Body of pancreas (tissue), 4 donors: ENCODE measurements at regions of chr1 and their contacts with region 1.

Region 1: GRCh38 chr1:14835725-14836124 is 237.2 kb downstream of the KAZN start:
- DNase-seq: no peak
- ATAC-seq: no peak
- H3K4me3 ChIP-seq: no peak overlapping the region
- H3K27ac ChIP-seq: no peak overlapping the region
- H3K4me1 ChIP-seq: no peaks in the 10 kb centered on the region
- H3K27me3 ChIP-seq: no peaks in the 10 kb centered on the region
- CTCF ChIP-seq: no peak
- POLR2A ChIP-seq: no peak

Region 2: GRCh38 chr1:14894811-14895560 is 59.3 kb after region 1 on chr1:
- intact Hi-C with region 1: no loop called
- DNase-seq: peak; percentile 38 to 70 (median 52)
- ATAC-seq: peak; percentile 74
- H3K4me3 ChIP-seq: no peak overlapping the region
- H3K27ac ChIP-seq: peak overlapping the region in 3 of 4 donors; percentile 20 to 62 (median 58)
- H3K4me1 ChIP-seq: peaks cover 34% of the 10 kb centered on the region
- H3K27me3 ChIP-seq: no peaks in the 10 kb centered on the region
- CTCF ChIP-seq: no peak
- POLR2A ChIP-seq: no peak

Region 3: GRCh38 chr1:15028102-15028501 is 192.4 kb after region 1 on chr1:
- intact Hi-C with region 1: loop called (anchors 10 kb)
- DNase-seq: peak in 3 of 4 donors; percentile 15 to 26 (median 18)
- ATAC-seq: no peak
- H3K4me3 ChIP-seq: no peak overlapping the region
- H3K27ac ChIP-seq: no peak overlapping the region
- H3K4me1 ChIP-seq: no peaks in the 10 kb centered on the region
- H3K27me3 ChIP-seq: no peaks in the 10 kb centered on the region
- CTCF ChIP-seq: no peak
- POLR2A ChIP-seq: no peak

Region 4: GRCh38 chr1:15106608-15107007 is 270.9 kb after region 1 on chr1:
- intact Hi-C with region 1: no loop called
- DNase-seq: peak; percentile 36 to 63 (median 54)
- ATAC-seq: peak; percentile 31
- H3K4me3 ChIP-seq: no peak overlapping the region
- H3K27ac ChIP-seq: no peak overlapping the region
- H3K4me1 ChIP-seq: peaks cover 6% of the 10 kb centered on the region
- H3K27me3 ChIP-seq: no peaks in the 10 kb centered on the region
- CTCF ChIP-seq: no peak
- POLR2A ChIP-seq: no peak